ENCODE measurements at regions of chr6 and their contacts with region 1.

Region 1: GRCh38 chr6:12911387-12911960 is 194.9 kb downstream of the PHACTR1 start:
- DNase-seq: no peak
- ATAC-seq: peak in 2 of 4 donors; percentile 27 to 34
- H3K4me3 ChIP-seq: no peak overlapping the region
- H3K27ac ChIP-seq: no peak overlapping the region
- H3K4me1 ChIP-seq: peaks cover 0 to 15% (median 0%) of the 10 kb centered on the region in 12 donors
- H3K27me3 ChIP-seq: no peaks in the 10 kb centered on the region
- CTCF ChIP-seq: peak; percentile 30 to 72 (median 58)
- POLR2A ChIP-seq: no peak

Region 2: DNA sequence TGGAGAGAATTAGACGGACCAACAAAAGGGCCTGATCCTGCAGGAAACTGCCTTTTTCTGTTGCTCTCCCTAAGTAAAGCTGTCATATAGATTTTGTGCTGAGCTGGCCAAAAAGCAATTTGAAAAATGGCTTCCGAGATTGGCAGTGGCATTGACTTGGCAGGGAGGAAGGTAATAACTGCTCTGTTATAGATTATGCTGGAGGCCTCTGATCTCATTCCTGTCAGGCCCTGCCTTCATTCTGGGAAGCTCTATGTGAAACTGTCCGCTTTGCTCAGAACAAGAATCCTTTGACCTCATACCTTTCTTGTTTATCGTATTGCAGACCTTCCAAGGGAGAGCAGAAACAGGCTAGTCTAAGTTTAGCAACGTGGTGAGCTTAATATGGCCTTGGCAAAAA is 39.5 kb after region 1 on chr6:
- intact Hi-C with region 1: loop called in 1 of 10 experiments (anchors 5 kb)
- DNase-seq: peak in 1 of 5 donors; percentile 29
- ATAC-seq: peak; percentile 33 to 91 (median 76)
- H3K4me3 ChIP-seq: no peak overlapping the region
- H3K27ac ChIP-seq: peak overlapping the region in 9 of 12 donors; percentile 19 to 56 (median 49)
- H3K4me1 ChIP-seq: peaks cover 0 to 15% (median 0%) of the 10 kb centered on the region in 12 donors
- H3K27me3 ChIP-seq: no peaks in the 10 kb centered on the region
- CTCF ChIP-seq: no peak
- POLR2A ChIP-seq: no peak

Region 3: DNA sequence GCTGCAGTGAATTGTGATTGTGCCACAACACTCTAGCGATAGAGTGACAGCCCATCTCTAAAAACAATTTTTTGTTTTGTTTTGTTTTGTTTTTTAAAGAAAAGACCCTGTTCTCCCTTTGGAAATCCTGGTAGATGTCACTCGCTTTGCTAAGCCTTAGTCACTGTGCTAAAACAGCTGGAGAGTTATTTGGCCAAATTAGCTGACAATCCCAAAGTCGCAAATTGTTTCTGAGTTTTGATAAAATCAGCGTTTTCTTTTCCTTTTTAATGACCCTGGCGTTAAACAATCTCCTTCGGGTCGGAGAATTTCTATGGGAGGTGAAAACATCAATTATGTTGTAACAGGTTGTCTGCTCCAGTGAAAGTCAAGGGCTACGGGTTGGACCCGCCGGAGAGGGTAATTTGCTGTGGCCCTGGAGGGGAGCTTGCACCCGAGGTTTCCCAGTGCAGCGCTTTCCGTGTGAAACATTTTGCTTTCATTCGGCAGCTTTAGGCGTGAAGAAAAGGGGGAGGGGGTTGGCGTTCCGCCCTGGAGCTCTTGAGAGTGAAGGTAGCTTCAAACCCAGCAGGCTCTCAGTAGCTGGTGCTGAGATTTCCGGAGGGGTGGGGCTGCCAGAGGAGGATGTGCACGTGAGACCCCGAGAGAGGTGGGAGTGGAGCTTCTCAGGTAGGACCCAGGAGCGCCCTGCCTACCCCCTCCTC is 101.7 kb after region 1 on chr6:
- intact Hi-C with region 1: loop called in 5 of 10 experiments (anchors 5 to 10 kb)
- DNase-seq: peak; percentile 39 to 76 (median 70)
- ATAC-seq: peak; percentile 19 to 62 (median 40)
- H3K4me3 ChIP-seq: peak overlapping the region; percentile 50 to 90 (median 69)
- H3K27ac ChIP-seq: peak overlapping the region in 11 of 12 donors; percentile 36 to 90 (median 81)
- H3K4me1 ChIP-seq: peaks cover 0 to 46% (median 17%) of the 10 kb centered on the region in 12 donors
- H3K27me3 ChIP-seq: peaks cover 0 to 29% (median 0%) of the 10 kb centered on the region in 9 donors
- CTCF ChIP-seq: no peak
- POLR2A ChIP-seq: no peak

Region 4: DNA sequence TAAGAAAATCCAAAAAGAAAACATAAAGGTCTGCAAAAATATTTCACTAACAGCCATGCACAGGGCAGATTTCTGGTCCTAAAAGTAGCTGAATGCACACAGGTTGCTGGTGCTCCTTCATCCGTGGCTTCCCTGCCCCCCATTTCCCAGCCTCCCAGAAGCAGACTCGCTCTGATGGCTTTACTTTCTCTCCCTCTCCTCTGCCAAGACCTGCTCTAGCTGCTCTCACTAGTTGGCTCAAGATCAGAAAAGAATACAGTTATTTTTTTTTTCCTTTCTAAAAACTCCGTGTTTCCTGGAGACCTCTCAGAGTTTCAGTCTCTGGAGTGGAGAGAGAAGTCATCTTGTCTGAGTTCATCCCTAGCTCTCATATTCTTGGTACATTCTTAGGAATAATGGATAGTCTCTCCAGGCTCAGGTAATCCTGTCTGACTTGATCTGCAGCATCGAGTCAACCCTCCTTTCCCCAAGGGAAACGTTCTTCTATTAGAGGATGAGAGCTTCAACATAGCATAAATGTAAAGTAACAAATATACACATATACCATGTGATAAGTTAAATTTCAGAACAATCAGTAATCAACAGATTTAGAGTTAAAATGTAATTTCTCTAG is 202.6 kb after region 1 on chr6:
- intact Hi-C with region 1: loop called in 1 of 10 experiments (anchors 10 kb)
- DNase-seq: no peak
- ATAC-seq: peak in 3 of 4 donors; percentile 48 to 75 (median 75)
- H3K4me3 ChIP-seq: no peak overlapping the region
- H3K27ac ChIP-seq: no peak overlapping the region
- H3K4me1 ChIP-seq: peaks cover 0 to 39% (median 13%) of the 10 kb centered on the region in 12 donors
- H3K27me3 ChIP-seq: no peaks in the 10 kb centered on the region
- CTCF ChIP-seq: no peak
- POLR2A ChIP-seq: no peak

Region 5: GRCh38 chr6:13296536-13296997 is 385.1 kb after region 1 on chr6:
- intact Hi-C with region 1: loop called in 2 of 10 experiments (anchors 10 kb)
- DNase-seq: no peak
- ATAC-seq: peak in 2 of 4 donors; percentile 21 to 31
- H3K4me3 ChIP-seq: no peak overlapping the region
- H3K27ac ChIP-seq: no peak overlapping the region
- H3K4me1 ChIP-seq: peaks cover 0 to 10% (median 0%) of the 10 kb centered on the region in 12 donors
- H3K27me3 ChIP-seq: no peaks in the 10 kb centered on the region
- CTCF ChIP-seq: no peak
- POLR2A ChIP-seq: no peak

Region 6: GRCh38 chr6:13328076-13328874 is 416.8 kb after region 1 on chr6 and contains the start of gene TBC1D7:
- intact Hi-C with region 1: loop called (anchors 2 to 5 kb)
- DNase-seq: peak; percentile 92 to 97 (median 94)
- ATAC-seq: peak; percentile 72 to 97 (median 96)
- H3K4me3 ChIP-seq: peak within 1 kb of the TSS; percentile 53 to 94 (median 86)
- H3K27ac ChIP-seq: peak within 1 kb of the TSS; percentile 75 to 97 (median 94)
- H3K4me1 ChIP-seq: peaks cover 0 to 43% (median 18%) of the 10 kb centered on the region in 12 donors
- H3K27me3 ChIP-seq: no peaks in the 10 kb centered on the region
- CTCF ChIP-seq: peak in 4 of 12 donors; percentile 5 to 23 (median 12)
- POLR2A ChIP-seq: peak in 1 of 2 donors; percentile 93
- total RNA-seq, gene TBC1D7: 17.0 to 31.9 (median 22.9) TPM

Measured in heart left ventricle (tissue), 16 donors.